A549 (cell line): ENCODE measurements at regions of chr6 and their contacts with region 1.

Region 1: GRCh38 chr6:30828027-30828960 is 56.0 kb upstream of the DDR1 start:
- DNase-seq: peak; percentile 70 to 84
- ATAC-seq: peak; percentile 91 to 95
- H3K4me3 ChIP-seq: no peak overlapping the region
- H3K27ac ChIP-seq: peak overlapping the region; percentile 91 to 95
- H3K4me1 ChIP-seq: peaks cover 27% of the 10 kb centered on the region
- CTCF ChIP-seq: peak; percentile 91
- EP300 ChIP-seq: no peak
- POLR2A ChIP-seq: no peak
- RAD21 ChIP-seq: peak; percentile 92 to 95

Region 2: DNA sequence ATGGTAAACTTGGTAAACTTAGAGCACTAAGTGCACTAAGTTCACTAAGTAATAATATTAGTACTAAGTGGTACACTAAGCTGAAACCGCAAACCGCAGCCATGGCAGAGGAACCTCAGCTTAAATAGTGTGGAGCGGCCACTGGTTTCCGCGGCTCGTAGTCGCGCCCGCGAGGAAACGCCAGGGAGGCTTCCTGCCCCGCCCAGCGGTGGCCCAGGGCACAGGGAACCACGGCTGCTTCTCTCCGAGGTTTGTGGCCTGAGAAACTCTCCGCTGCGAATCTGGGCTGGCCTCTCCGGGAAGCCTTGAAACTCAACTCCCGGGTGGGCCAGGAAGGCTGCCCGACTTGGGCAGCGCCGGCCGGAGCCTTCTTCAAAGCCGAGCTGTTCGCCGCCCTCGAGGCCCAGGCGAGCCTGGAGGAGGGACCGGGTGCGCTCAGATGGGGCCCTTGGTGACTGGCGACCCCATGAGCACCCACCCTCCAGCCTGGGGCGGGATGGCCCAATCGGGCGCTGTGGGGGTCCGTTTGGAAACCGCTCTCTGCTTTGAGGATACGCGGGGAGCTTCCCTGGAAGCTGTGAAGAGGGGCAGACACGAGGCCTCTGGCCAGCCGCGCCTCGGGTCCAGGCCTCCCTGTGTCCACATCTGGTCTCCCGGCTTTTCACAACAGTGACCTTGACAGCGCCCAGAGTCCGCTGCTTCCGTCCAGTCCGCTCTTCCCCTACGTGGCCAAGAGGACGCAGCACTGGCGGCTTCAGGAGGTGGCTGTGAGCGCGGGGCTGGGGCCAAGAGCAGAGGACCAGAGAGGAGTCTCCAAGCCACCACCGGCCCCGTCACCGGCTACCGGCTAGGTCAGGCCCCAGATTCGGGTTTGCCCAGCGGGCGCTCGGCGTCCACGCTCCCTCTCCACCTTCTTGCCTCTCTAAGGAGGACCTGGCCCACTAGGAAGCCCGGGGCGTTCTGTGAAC is 364.4 kb before region 1 on chr6:
- CTCF ChIA-PET with region 1: no interaction called
- POLR2A ChIA-PET with region 1: no interaction called
- DNase-seq: no peak
- ATAC-seq: no peak; a peak in 1 of 6 replicates
- H3K4me3 ChIP-seq: no peak overlapping the region
- H3K27ac ChIP-seq: no peak overlapping the region
- H3K4me1 ChIP-seq: peaks cover 6% of the 10 kb centered on the region; the same call in 1 of the 3 replicates
- CTCF ChIP-seq: no peak
- EP300 ChIP-seq: no peak
- POLR2A ChIP-seq: no peak
- RAD21 ChIP-seq: no peak

Region 3: DNA sequence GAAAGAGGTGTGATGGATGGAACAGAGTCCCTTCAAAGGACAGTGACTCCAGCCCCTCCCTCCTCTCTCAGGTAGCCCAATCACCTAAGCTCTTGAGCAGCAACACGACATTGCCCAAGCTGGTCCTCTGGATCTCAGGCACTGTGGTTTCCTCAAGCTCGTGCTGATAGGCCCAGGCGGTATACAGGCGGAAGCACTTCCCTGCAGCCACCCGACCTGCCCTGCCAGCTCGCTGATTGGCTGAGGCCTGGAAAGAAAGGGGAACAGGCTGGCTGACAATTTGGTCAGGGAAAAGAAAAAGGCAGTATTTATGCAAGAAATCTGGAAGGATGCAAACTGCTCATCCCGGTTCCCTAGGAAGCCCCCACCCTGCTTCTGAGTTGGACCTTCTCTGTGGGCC is 171.8 kb before region 1 on chr6:
- CTCF ChIA-PET with region 1: no interaction called
- POLR2A ChIA-PET with region 1: no interaction called
- DNase-seq: no peak
- ATAC-seq: peak in 1 of 2 experiments; percentile 30; a peak in 1 of 6 replicates
- H3K4me3 ChIP-seq: no peak overlapping the region
- H3K27ac ChIP-seq: no peak overlapping the region
- H3K4me1 ChIP-seq: no peaks in the 10 kb centered on the region
- CTCF ChIP-seq: no peak
- EP300 ChIP-seq: no peak
- POLR2A ChIP-seq: no peak
- RAD21 ChIP-seq: no peak

Region 4: DNA sequence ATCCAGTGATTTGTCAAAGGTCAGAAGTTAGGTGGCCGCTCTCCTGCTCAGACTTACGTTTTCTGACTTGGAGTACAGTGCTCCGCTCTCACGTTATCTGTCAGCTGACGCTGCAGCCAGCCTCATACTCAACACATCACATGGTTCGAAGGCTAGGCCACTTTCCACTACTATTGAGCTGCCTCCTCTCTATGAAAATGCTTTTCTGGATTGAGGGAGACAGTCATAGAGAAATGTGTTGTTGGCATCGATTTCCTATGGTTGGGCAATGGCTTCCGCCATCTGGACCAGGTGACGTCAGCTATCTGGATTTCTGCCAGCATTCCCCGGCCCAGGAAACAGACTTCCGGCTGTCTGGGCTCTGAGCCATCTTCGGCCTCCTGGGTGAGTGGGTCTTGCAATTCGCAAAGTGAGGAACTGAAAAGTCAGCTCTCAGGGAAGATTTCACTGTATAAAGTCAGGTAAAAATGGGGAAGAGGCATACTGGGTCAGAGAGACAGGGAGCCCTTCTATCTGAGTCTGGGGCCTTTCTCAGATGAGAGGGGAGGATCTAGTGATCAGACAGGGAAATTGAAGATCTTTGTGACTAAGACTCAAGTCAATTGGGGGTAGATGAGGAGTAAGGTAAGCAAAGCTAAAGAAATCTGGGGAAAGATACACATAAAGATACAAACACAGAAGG is 46.4 kb before region 1 on chr6:
- CTCF ChIA-PET with region 1: interaction called, 15 read pairs
- POLR2A ChIA-PET with region 1: no interaction called
- DNase-seq: peak; percentile 58 to 97
- ATAC-seq: peak; percentile 91 to 95
- H3K4me3 ChIP-seq: peak overlapping the region; percentile 11; the same call in 1 of the 3 replicates
- H3K27ac ChIP-seq: peak overlapping the region; percentile 96 to 97
- H3K4me1 ChIP-seq: peaks cover 88% of the 10 kb centered on the region
- CTCF ChIP-seq: no peak
- EP300 ChIP-seq: peak; percentile 93 to 96; a peak in 4 of 5 replicates
- POLR2A ChIP-seq: no peak
- RAD21 ChIP-seq: peak in 1 of 2 experiments; percentile 51; a peak in 1 of 5 replicates

Region 5: DNA sequence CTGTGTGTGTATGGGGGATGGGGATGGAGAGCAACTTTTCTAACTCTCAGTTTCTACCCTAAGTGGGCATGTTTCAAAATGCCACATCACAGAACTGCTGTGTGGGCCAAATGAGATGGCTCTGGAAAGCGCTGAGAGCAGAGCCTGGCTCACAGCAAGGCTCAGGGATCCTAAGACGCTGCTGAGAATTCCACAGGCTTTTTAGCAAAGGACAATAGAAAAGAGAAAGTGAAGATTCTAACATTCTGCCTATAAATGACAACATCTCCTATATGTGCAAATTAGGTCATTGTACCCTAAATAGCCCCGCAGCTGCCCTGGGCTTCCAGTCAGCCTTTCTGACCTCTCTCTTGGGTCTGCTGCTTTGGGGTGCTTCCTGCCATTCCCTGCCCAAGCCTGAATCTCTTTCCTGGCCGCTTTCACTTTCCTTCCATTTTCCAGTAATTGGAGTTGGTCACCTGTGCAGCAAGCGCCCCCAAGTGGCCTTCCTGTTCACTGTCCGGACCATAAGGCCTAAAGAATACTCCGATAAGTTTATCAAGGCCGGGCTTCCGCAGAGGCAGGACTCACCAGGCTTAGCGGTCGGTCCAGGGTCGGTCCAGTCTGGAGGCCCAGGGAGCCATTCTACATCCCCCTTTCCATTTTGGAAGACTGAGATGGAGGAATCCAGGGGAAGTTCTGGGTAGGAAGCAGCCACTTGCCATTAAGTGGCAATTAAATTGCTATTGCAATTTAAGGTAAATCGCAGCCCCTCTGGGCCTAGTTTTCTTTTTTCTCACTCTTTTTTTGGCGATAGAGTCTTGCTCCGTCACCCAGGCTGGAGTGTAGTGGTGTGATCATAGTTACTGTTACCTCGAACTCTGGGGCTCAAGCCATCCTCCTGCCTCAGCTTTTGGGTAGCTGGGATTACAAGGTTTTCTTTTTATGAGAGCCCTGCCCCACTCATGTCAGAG is 49.4 kb after region 1 on chr6:
- CTCF ChIA-PET with region 1: interaction called, 62 read pairs
- POLR2A ChIA-PET with region 1: interaction called, 4 read pairs
- DNase-seq: peak; percentile 76 to 88
- ATAC-seq: peak; percentile 88 to 94
- H3K4me3 ChIP-seq: peak overlapping the region; percentile 14; the same call in 1 of the 3 replicates
- H3K27ac ChIP-seq: peak overlapping the region; percentile 79 to 91
- H3K4me1 ChIP-seq: peaks cover 15% of the 10 kb centered on the region
- CTCF ChIP-seq: peak; percentile 82
- EP300 ChIP-seq: no peak
- POLR2A ChIP-seq: no peak
- RAD21 ChIP-seq: peak; percentile 93 to 94

Region 6: GRCh38 chr6:31068669-31069340 is 240.5 kb after region 1 on chr6:
- CTCF ChIA-PET with region 1: interaction called, 13 read pairs
- POLR2A ChIA-PET with region 1: no interaction called
- DNase-seq: peak; percentile 59 to 80
- ATAC-seq: peak; percentile 90 to 95
- H3K4me3 ChIP-seq: no peak overlapping the region
- H3K27ac ChIP-seq: no peak overlapping the region
- H3K4me1 ChIP-seq: peaks cover 12% of the 10 kb centered on the region
- CTCF ChIP-seq: peak; percentile 62
- EP300 ChIP-seq: no peak
- POLR2A ChIP-seq: no peak
- RAD21 ChIP-seq: peak; percentile 65 to 66

Region 7: GRCh38 chr6:31087494-31088089 is 259.3 kb after region 1 on chr6:
- CTCF ChIA-PET with region 1: interaction called, 36 read pairs
- POLR2A ChIA-PET with region 1: no interaction called
- DNase-seq: peak; percentile 76 to 81
- ATAC-seq: peak; percentile 97 to 98
- H3K4me3 ChIP-seq: no peak overlapping the region
- H3K27ac ChIP-seq: no peak overlapping the region
- H3K4me1 ChIP-seq: peaks cover 6% of the 10 kb centered on the region; the same call in 1 of the 3 replicates
- CTCF ChIP-seq: peak; percentile 68
- EP300 ChIP-seq: no peak
- POLR2A ChIP-seq: no peak
- RAD21 ChIP-seq: peak; percentile 72 to 76